IMR-90 (cell line): ENCODE measurements at regions of chr3 and their contacts with region 1.

Region 1: GRCh38 chr3:159852821-159853505 is 135.7 kb upstream of the IL12A start:
- DNase-seq: peak; percentile 56
- ATAC-seq: peak; percentile 19
- H3K4me3 ChIP-seq: peak overlapping the region; percentile 21; the same call in 1 of the 2 replicates
- H3K27ac ChIP-seq: peak overlapping the region; percentile 68
- H3K4me1 ChIP-seq: peaks cover 19% of the 10 kb centered on the region
- H3K27me3 ChIP-seq: no peaks in the 10 kb centered on the region
- CTCF ChIP-seq: no peak
- POLR2A ChIP-seq: 0 out of 2 replicates have a peak, but pooled peaks have one; percentile 25
- RAD21 ChIP-seq: no peak

Region 2: GRCh38 chr3:159839561-159840379 is 13.2 kb before region 1 on chr3:
- CTCF ChIA-PET with region 1: no interaction called
- POLR2A ChIA-PET with region 1: no interaction called
- dilution Hi-C with region 1: no loop called
- in situ Hi-C with region 1: no loop called
- intact Hi-C with region 1: loop called (anchors 1 kb)
- DNase-seq: no peak
- ATAC-seq: no peak
- H3K4me3 ChIP-seq: no peak within 1 kb of the TSS
- H3K27ac ChIP-seq: no peak within 1 kb of the TSS
- H3K4me1 ChIP-seq: peaks cover 26% of the 10 kb centered on the region
- H3K27me3 ChIP-seq: no peaks in the 10 kb centered on the region
- CTCF ChIP-seq: no peak
- POLR2A ChIP-seq: no peak
- RAD21 ChIP-seq: no peak

Region 3: GRCh38 chr3:159872374-159873109 is 19.6 kb after region 1 on chr3:
- CTCF ChIA-PET with region 1: interaction called, 3 read pairs
- POLR2A ChIA-PET with region 1: no interaction called
- dilution Hi-C with region 1: no loop called
- in situ Hi-C with region 1: no loop called
- intact Hi-C with region 1: loop called (anchors 2 kb)
- DNase-seq: peak; percentile 95
- ATAC-seq: peak; percentile 95
- H3K4me3 ChIP-seq: no peak overlapping the region
- H3K27ac ChIP-seq: peak overlapping the region; percentile 38; the same call in 1 of the 2 replicates
- H3K4me1 ChIP-seq: peaks cover 12% of the 10 kb centered on the region
- H3K27me3 ChIP-seq: no peaks in the 10 kb centered on the region
- CTCF ChIP-seq: peak; percentile 33
- POLR2A ChIP-seq: no peak
- RAD21 ChIP-seq: peak; percentile 21; the same call in 1 of the 2 replicates

Region 4: GRCh38 chr3:160106905-160107861 is 254.2 kb after region 1 on chr3:
- CTCF ChIA-PET with region 1: no interaction called
- POLR2A ChIA-PET with region 1: no interaction called
- dilution Hi-C with region 1: no loop called
- in situ Hi-C with region 1: no loop called
- intact Hi-C with region 1: no loop called
- DNase-seq: no peak
- ATAC-seq: no peak
- H3K4me3 ChIP-seq: no peak overlapping the region
- H3K27ac ChIP-seq: no peak overlapping the region
- H3K4me1 ChIP-seq: no peaks in the 10 kb centered on the region
- H3K27me3 ChIP-seq: peaks cover 2% of the 10 kb centered on the region
- CTCF ChIP-seq: no peak
- POLR2A ChIP-seq: no peak
- RAD21 ChIP-seq: no peak